Right ventricle myocardium inferior (tissue), 1 donor: ENCODE measurements at regions of chr1 and their contacts with region 1.

Region 1: GRCh38 chr1:12356004-12356890 is 126.4 kb downstream of the VPS13D start:
- DNase-seq: no peak
- ATAC-seq: no peak

Region 2: GRCh38 chr1:12269351-12269750 is 86.9 kb before region 1 on chr1:
- intact Hi-C with region 1: loop called (anchors 10 kb)
- DNase-seq: no peak
- ATAC-seq: no peak